ENCODE measurements at regions of chr1 and their contacts with region 1.

Region 1: GRCh38 chr1:18299441-18300338 is 181.0 kb upstream of the KLHDC7A start:
- DNase-seq: no peak
- H3K4me3 ChIP-seq: no peak overlapping the region
- H3K27ac ChIP-seq: no peak overlapping the region
- H3K4me1 ChIP-seq: no peaks in the 10 kb centered on the region
- H3K27me3 ChIP-seq: peaks cover 50% of the 10 kb centered on the region
- CTCF ChIP-seq: peak; percentile 62 to 82 (median 74)
- EP300 ChIP-seq: no peak
- POLR2A ChIP-seq: no peak

Region 2: GRCh38 chr1:18556364-18556763 is 256.7 kb after region 1 on chr1:
- in situ Hi-C with region 1: loop called in 1 of 4 experiments (anchors 25 kb)
- intact Hi-C with region 1: no loop called
- DNase-seq: no peak
- H3K4me3 ChIP-seq: no peak overlapping the region
- H3K27ac ChIP-seq: no peak overlapping the region
- H3K4me1 ChIP-seq: peaks cover 0 to 12% (median 4%) of the 10 kb centered on the region in 4 donors
- H3K27me3 ChIP-seq: peaks cover 51% of the 10 kb centered on the region
- CTCF ChIP-seq: peak in 2 of 5 experiments; percentile 30 to 31
- EP300 ChIP-seq: no peak
- POLR2A ChIP-seq: no peak

Region 3: GRCh38 chr1:18849261-18849711 is 549.6 kb after region 1 on chr1:
- in situ Hi-C with region 1: no loop called
- intact Hi-C with region 1: no loop called
- DNase-seq: no peak
- H3K4me3 ChIP-seq: no peak overlapping the region
- H3K27ac ChIP-seq: no peak overlapping the region
- H3K4me1 ChIP-seq: no peaks in the 10 kb centered on the region
- H3K27me3 ChIP-seq: no peaks in the 10 kb centered on the region
- CTCF ChIP-seq: no peak
- EP300 ChIP-seq: no peak
- POLR2A ChIP-seq: no peak